Activated B cell treated with CpG ODN at 0.5 μM for 24 hours (primary cell): ENCODE measurements at regions of chr12 and their contacts with region 1.

Region 1: GRCh38 chr12:50074936-50075807 is 10.0 kb upstream of the SMARCD1 start:
- DNase-seq: peak; percentile 81
- ATAC-seq: peak; percentile 98
- H3K4me3 Mint-ChIP-seq: no peak overlapping the region
- H3K27ac Mint-ChIP-seq: no peak overlapping the region
- H3K4me1 Mint-ChIP-seq: peaks cover 4% of the 10 kb centered on the region
- H3K27me3 Mint-ChIP-seq: peaks cover 15% of the 10 kb centered on the region
- CTCF ChIP-seq: peak; percentile 53

Region 2: GRCh38 chr12:49967042-49967776 is 108.0 kb before region 1 on chr12:
- CTCF ChIA-PET with region 1: interaction called, 73 read pairs
- POLR2A ChIA-PET with region 1: interaction called, 4 read pairs
- intact Hi-C with region 1: loop called (anchors 1 kb)
- DNase-seq: peak; percentile 86
- ATAC-seq: peak; percentile 89
- H3K4me3 Mint-ChIP-seq: peak overlapping the region; percentile 71
- H3K27ac Mint-ChIP-seq: no peak overlapping the region
- H3K4me1 Mint-ChIP-seq: peaks cover 4% of the 10 kb centered on the region
- H3K27me3 Mint-ChIP-seq: peaks cover 39% of the 10 kb centered on the region
- CTCF ChIP-seq: peak; percentile 51

Region 3: GRCh38 chr12:50055831-50056638 is 19.1 kb before region 1 on chr12:
- CTCF ChIA-PET with region 1: interaction called, 11 read pairs
- POLR2A ChIA-PET with region 1: no interaction called
- intact Hi-C with region 1: no loop called
- DNase-seq: peak; percentile 39
- ATAC-seq: peak; percentile 83
- H3K4me3 Mint-ChIP-seq: peak overlapping the region; percentile 70
- H3K27ac Mint-ChIP-seq: no peak overlapping the region
- H3K4me1 Mint-ChIP-seq: peaks cover 16% of the 10 kb centered on the region
- H3K27me3 Mint-ChIP-seq: peaks cover 47% of the 10 kb centered on the region
- CTCF ChIP-seq: peak; percentile 81

Region 4: GRCh38 chr12:50174971-50175715 is 100.0 kb after region 1 on chr12:
- CTCF ChIA-PET with region 1: interaction called, 37 read pairs
- POLR2A ChIA-PET with region 1: no interaction called
- intact Hi-C with region 1: loop called (anchors 1 kb)
- DNase-seq: no peak
- ATAC-seq: no peak
- H3K4me3 Mint-ChIP-seq: no peak overlapping the region
- H3K27ac Mint-ChIP-seq: no peak overlapping the region
- H3K4me1 Mint-ChIP-seq: no peaks in the 10 kb centered on the region
- H3K27me3 Mint-ChIP-seq: no peaks in the 10 kb centered on the region
- CTCF ChIP-seq: peak; percentile 91

Region 5: GRCh38 chr12:50637870-50638481 is 562.8 kb after region 1 on chr12:
- CTCF ChIA-PET with region 1: no interaction called
- POLR2A ChIA-PET with region 1: no interaction called
- intact Hi-C with region 1: loop called (anchors 10 kb)
- DNase-seq: no peak
- ATAC-seq: peak; percentile 47
- H3K4me3 Mint-ChIP-seq: no peak overlapping the region
- H3K27ac Mint-ChIP-seq: peak overlapping the region; percentile 26
- H3K4me1 Mint-ChIP-seq: peaks cover 10% of the 10 kb centered on the region
- H3K27me3 Mint-ChIP-seq: no peaks in the 10 kb centered on the region
- CTCF ChIP-seq: no peak